PC-3 (cell line): ENCODE measurements at regions of chr1 and their contacts with region 1.

Region 1: DNA sequence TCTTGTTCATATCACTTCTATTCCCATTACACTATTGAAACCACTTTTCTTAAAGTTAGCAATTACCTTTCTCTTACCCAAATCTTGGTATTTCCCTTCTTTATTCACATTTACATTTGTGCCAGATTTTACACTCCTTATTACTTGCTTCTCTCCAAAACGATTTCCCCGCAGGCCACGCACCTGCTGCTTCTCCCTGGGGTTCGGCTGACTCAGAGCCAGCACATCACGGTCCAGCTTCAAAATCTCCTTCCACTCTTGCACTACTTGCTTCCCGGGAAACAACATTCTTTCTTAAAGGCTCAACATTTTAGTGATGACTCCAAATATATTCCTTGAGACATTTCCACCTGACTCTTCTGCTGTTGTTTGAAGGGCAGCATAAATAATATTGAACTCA is 20.7 kb downstream of the LHX9 start:
- DNase-seq: no peak
- ATAC-seq: no peak
- H3K4me3 ChIP-seq: no peak overlapping the region
- H3K27ac ChIP-seq: no peak overlapping the region
- H3K4me1 ChIP-seq: no peaks in the 10 kb centered on the region
- H3K27me3 ChIP-seq: no peaks in the 10 kb centered on the region
- CTCF ChIP-seq: no peak

Region 2: GRCh38 chr1:197577580-197577979 is 360.3 kb before region 1 on chr1:
- CTCF ChIA-PET with region 1: no interaction called
- POLR2A ChIA-PET with region 1: interaction called, 21 read pairs
- intact Hi-C with region 1: no loop called
- DNase-seq: no peak
- ATAC-seq: no peak
- H3K4me3 ChIP-seq: no peak overlapping the region
- H3K27ac ChIP-seq: no peak overlapping the region
- H3K4me1 ChIP-seq: no peaks in the 10 kb centered on the region
- H3K27me3 ChIP-seq: no peaks in the 10 kb centered on the region
- CTCF ChIP-seq: no peak